ENCODE measurements at regions of chr6 and their contacts with region 1.

Region 1: DNA sequence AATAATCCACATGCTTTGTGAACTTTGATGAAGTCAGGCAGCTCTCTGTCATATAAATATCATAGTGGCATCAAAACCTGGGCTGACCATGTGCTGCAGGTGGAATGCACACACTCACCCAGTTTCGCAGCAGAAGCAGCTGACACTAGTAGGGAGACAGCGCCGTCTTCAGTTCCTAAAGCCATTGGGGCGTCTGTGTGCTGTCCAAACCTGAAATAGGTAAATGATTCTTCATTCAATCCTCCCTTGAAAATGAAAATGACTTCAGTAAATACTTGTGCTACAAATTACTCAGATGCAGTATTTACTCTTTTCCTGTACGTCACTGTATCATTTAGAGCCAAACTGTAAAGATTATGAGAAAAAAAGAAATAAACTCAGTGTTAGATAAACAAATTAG is 127.5 kb downstream of the EYA4 start:
- DNase-seq: no peak
- H3K4me3 ChIP-seq: no peak overlapping the region
- H3K27ac ChIP-seq: no peak overlapping the region
- H3K4me1 ChIP-seq: no peaks in the 10 kb centered on the region
- H3K27me3 ChIP-seq: peaks cover 3 to 6% of the 10 kb centered on the region in 2 experiments
- CTCF ChIP-seq: no peak
- POLR2A ChIP-seq: no peak

Region 2: DNA sequence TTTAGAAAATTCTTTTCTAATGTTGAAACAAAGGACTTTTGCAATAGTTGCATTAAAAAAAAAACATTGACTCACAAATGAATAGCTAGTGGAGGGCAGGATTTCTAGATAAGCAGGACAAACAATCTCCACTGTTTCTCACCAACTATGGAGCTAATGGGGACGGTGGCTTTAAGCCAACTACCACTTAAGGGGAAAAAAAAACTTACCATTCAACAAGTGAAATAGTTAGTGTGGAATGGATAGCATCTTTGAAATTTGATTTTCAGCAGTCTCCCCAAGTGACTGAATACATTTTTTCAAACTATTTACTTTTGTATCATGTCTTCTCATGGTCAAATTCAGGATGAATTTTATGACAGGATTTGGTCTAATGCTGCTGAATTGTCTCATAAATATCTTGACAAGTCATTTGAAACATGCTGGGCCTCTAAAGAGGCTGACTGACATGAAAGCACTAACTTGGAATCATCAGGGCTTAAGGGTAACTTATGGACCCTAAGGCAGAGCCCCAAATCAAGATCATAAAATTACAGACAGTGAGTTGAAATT is 27.0 kb before region 1 on chr6:
- CTCF ChIA-PET with region 1: no interaction called
- POLR2A ChIA-PET with region 1: no interaction called
- dilution Hi-C with region 1: no loop called
- intact Hi-C with region 1: loop called (anchors 1 kb)
- DNase-seq: peak; percentile 76
- H3K4me3 ChIP-seq: no peak overlapping the region
- H3K27ac ChIP-seq: no peak overlapping the region
- H3K4me1 ChIP-seq: no peaks in the 10 kb centered on the region
- H3K27me3 ChIP-seq: no peaks in the 10 kb centered on the region
- CTCF ChIP-seq: no peak
- POLR2A ChIP-seq: no peak